Gastrocnemius medialis (tissue), 4 donors: ENCODE measurements at regions of chr1 and their contacts with region 1.

Region 1: DNA sequence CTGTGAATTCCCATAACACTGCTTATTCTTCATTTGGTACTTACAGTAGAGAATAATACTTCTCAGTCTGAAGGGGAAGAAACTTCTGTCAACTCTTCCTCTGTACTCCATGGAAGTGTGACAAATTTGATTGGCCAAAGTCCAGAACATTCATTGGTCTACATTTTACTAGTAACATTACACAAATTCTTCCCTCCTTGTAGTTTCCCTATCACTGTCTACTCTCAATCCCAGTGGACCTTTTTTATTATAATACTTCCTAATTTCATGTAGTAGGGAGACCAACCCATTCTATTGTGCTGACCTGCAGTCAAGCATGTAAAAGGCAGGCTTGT is 74.7 kb downstream of the ALG6 start:
- DNase-seq: no peak
- ATAC-seq: no peak
- H3K4me3 ChIP-seq: no peak overlapping the region
- H3K27ac ChIP-seq: no peak overlapping the region
- H3K4me1 ChIP-seq: no peaks in the 10 kb centered on the region
- H3K27me3 ChIP-seq: no peaks in the 10 kb centered on the region
- CTCF ChIP-seq: no peak
- POLR2A ChIP-seq: no peak

Region 2: DNA sequence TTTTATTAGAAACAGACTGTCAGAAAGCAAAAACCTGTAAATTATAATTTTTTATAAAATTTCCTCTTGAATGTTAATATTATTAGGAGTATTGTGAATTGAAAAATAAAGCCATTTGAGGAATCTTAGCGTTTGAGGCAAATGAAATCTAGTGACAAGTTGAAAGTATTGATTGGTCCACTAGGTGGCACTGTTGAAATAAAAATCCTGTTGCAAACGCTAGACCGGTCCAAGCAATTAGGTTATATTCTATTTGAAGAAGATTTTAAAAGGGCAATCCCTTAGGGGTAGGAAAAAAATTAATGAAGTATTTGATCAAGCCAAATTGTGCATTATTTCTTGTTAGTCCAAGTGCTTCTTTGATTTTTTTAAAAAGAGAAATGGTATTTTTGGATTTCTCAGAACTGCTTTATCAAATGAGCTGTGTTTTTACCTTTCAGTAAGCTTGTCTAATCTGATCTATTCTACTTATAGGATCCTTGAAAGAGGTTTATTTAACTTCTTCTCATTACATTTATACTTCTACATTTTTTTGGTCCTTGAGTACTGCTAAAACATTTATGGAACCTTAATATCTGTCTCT is 600.4 kb before region 1 on chr1:
- in situ Hi-C with region 1: loop called in 2 of 4 experiments (anchors 25 kb)
- intact Hi-C with region 1: loop called (anchors 5 kb)
- DNase-seq: peak in 1 of 2 donors; percentile 3
- ATAC-seq: peak; percentile 58 to 86
- H3K4me3 ChIP-seq: no peak overlapping the region
- H3K27ac ChIP-seq: no peak overlapping the region
- H3K4me1 ChIP-seq: peaks cover 4% of the 10 kb centered on the region in 2 donors
- H3K27me3 ChIP-seq: no peaks in the 10 kb centered on the region
- CTCF ChIP-seq: peak; percentile 40 to 72 (median 51)
- POLR2A ChIP-seq: no peak

Region 3: DNA sequence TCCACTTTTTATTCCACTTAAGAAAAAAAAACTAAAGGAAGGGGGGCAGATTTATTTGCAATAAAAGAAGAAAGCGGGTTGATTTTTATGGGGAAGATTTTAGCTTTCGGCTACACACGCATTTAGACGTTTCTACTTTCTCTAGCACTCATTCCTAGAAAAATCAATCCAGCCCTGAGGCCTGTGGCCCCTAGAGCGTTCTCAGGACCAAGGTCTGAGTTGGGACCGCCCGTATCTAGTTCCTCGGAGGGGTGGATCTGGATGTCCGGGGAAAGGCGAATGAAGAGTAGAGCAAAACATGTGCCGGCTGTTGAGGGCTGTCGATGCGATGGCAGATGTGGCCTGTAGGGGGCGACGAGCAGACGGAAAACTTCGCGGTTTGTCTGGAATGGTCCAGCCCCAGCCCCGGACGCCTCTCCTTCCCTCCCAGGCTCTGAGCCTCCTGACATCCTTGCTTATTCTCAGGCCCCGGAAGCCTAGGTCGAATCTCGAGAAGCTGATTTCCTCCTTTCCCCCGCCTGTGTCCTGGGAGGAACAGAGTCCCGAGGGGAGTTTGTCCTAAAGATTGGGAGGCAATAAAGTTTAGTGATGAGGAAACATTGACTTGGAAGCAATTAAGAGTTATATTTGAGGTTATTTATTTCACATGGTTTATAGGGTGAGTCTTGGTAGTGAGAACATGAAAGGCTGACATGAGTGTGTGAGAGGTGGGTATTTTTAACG is 114.5 kb before region 1 on chr1:
- in situ Hi-C with region 1: no loop called
- intact Hi-C with region 1: loop called (anchors 5 kb)
- DNase-seq: peak in 1 of 2 donors; percentile 53
- ATAC-seq: peak; percentile 65 to 66
- H3K4me3 ChIP-seq: no peak overlapping the region
- H3K27ac ChIP-seq: no peak overlapping the region
- H3K4me1 ChIP-seq: peaks cover 4 to 6% of the 10 kb centered on the region in 2 donors
- H3K27me3 ChIP-seq: peaks cover 95 to 96% (median 95%) of the 10 kb centered on the region in 3 donors
- CTCF ChIP-seq: peak; percentile 54 to 73 (median 63)
- POLR2A ChIP-seq: no peak